ENCODE measurements at regions of chr22 and their contacts with region 1.

Region 1: GRCh38 chr22:42033263-42034181 is 34.9 kb downstream of the WBP2NL start:
- DNase-seq: no peak
- ATAC-seq: no peak
- H3K4me3 ChIP-seq: no peak overlapping the region
- H3K4me3 Mint-ChIP-seq: no peak overlapping the region
- H3K27ac ChIP-seq: no peak overlapping the region
- H3K27ac Mint-ChIP-seq: no peak overlapping the region
- H3K4me1 ChIP-seq: peaks cover 11% of the 10 kb centered on the region
- H3K4me1 Mint-ChIP-seq: peaks cover 5% of the 10 kb centered on the region
- H3K27me3 ChIP-seq: no peaks in the 10 kb centered on the region
- H3K27me3 Mint-ChIP-seq: no peaks in the 10 kb centered on the region
- CTCF ChIP-seq: no peak

Region 2: DNA sequence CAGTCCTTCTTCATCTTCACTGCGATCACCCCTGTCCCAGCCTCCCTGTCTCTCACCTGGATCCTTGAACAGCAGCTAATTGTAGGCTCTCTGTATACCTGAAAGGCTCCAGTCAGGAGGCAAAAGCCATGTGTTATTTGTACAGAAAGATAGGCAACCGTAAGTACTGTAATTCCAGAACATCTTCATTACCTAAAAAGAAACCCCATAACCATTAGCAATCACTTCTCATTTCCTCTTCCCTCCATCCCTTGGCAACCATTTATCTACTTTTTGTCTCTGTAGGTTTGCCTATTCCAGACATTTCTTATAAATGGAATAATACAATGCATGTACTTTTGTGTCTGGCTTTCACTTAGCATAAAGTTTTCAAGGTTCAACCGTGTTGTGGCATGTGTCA is 19.2 kb after region 1 on chr22:
- CTCF ChIA-PET with region 1: no interaction called
- POLR2A ChIA-PET with region 1: no interaction called
- intact Hi-C with region 1: loop called in 1 of 2 experiments (anchors 1 kb)
- DNase-seq: no peak
- ATAC-seq: no peak
- H3K4me3 ChIP-seq: no peak overlapping the region
- H3K4me3 Mint-ChIP-seq: no peak overlapping the region
- H3K27ac ChIP-seq: no peak overlapping the region
- H3K27ac Mint-ChIP-seq: no peak overlapping the region
- H3K4me1 ChIP-seq: no peaks in the 10 kb centered on the region
- H3K4me1 Mint-ChIP-seq: no peaks in the 10 kb centered on the region
- H3K27me3 ChIP-seq: no peaks in the 10 kb centered on the region
- H3K27me3 Mint-ChIP-seq: no peaks in the 10 kb centered on the region
- CTCF ChIP-seq: no peak

Measured in CD4-positive, alpha-beta T cell (primary cell).